ENCODE measurements at regions of chr2 and their contacts with region 1.

Region 1: DNA sequence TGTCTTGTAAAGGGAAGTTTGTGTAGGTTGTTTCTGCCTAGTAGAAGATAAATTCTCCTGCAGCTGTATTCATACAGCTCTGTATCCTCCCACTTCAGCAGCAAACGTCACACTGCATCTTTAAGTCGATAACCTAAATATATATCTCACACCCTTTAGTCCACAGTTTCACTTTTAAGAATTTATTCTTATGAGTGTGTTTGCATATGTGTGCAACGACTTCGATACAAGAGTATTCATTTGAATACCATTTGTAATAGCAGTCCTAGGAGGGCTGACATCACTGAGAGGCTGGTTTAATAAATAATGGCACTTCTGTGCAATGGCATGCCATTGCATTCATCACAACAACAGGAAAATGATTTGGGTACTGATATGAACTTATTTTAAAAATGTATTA is 63.8 kb upstream of the MSH6 start:
- DNase-seq: no peak
- H3K4me3 Mint-ChIP-seq: no peak overlapping the region
- H3K27ac Mint-ChIP-seq: no peak overlapping the region
- H3K4me1 Mint-ChIP-seq: peaks cover 12% of the 10 kb centered on the region
- H3K27me3 Mint-ChIP-seq: peaks cover 2% of the 10 kb centered on the region

Region 2: GRCh38 chr2:47272031-47272864 is 446.9 kb before region 1 on chr2:
- CTCF ChIA-PET with region 1: no interaction called
- POLR2A ChIA-PET with region 1: no interaction called
- intact Hi-C with region 1: no loop called
- DNase-seq: peak; percentile 72
- H3K4me3 Mint-ChIP-seq: peak overlapping the region; percentile 63
- H3K27ac Mint-ChIP-seq: no peak overlapping the region
- H3K4me1 Mint-ChIP-seq: no peaks in the 10 kb centered on the region
- H3K27me3 Mint-ChIP-seq: no peaks in the 10 kb centered on the region

Region 3: DNA sequence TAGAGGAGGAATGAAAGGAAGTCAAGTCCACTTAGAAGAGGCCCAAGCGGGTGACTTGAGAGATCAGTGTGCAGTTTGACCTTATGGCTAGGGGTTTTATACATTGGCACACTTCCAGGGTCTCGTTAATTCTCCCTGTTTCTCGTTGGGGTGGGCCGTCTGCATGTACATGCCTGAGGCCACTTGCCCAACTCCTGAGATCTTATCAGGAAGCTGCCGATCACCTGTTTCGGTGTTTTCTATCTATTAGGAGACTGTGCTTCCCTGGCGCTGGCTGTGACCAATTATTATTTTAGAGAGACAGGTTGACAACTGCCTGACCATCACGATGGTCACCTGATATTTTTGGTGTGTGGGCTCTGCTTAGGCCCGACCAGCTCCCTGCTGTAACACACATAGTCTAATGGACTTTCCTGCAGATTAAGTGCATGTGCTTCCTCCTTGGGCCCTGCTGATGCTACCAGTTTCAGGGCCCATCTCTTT is 32.8 kb after region 1 on chr2:
- CTCF ChIA-PET with region 1: no interaction called
- POLR2A ChIA-PET with region 1: no interaction called
- intact Hi-C with region 1: loop called (anchors 1 kb)
- DNase-seq: no peak
- H3K4me3 Mint-ChIP-seq: no peak overlapping the region
- H3K27ac Mint-ChIP-seq: peak overlapping the region; percentile 87
- H3K4me1 Mint-ChIP-seq: peaks cover 17% of the 10 kb centered on the region
- H3K27me3 Mint-ChIP-seq: no peaks in the 10 kb centered on the region

Region 4: GRCh38 chr2:47782671-47783485 is 63.8 kb after region 1 on chr2 and contains the start of gene MSH6:
- CTCF ChIA-PET with region 1: no interaction called
- POLR2A ChIA-PET with region 1: no interaction called
- intact Hi-C with region 1: no loop called
- DNase-seq: peak; percentile 91
- H3K4me3 Mint-ChIP-seq: peak within 1 kb of the TSS; percentile 89
- H3K27ac Mint-ChIP-seq: peak within 1 kb of the TSS; percentile 89
- H3K4me1 Mint-ChIP-seq: peaks cover 22% of the 10 kb centered on the region
- H3K27me3 Mint-ChIP-seq: no peaks in the 10 kb centered on the region
- total RNA-seq, gene MSH6: 131 to 140 TPM